Activated CD4-positive, alpha-beta T cell treated with anti-CD3 and anti-CD28 coated beads for 36 hours (primary cell): ENCODE measurements at regions of chr6 and their contacts with region 1.

Region 1: DNA sequence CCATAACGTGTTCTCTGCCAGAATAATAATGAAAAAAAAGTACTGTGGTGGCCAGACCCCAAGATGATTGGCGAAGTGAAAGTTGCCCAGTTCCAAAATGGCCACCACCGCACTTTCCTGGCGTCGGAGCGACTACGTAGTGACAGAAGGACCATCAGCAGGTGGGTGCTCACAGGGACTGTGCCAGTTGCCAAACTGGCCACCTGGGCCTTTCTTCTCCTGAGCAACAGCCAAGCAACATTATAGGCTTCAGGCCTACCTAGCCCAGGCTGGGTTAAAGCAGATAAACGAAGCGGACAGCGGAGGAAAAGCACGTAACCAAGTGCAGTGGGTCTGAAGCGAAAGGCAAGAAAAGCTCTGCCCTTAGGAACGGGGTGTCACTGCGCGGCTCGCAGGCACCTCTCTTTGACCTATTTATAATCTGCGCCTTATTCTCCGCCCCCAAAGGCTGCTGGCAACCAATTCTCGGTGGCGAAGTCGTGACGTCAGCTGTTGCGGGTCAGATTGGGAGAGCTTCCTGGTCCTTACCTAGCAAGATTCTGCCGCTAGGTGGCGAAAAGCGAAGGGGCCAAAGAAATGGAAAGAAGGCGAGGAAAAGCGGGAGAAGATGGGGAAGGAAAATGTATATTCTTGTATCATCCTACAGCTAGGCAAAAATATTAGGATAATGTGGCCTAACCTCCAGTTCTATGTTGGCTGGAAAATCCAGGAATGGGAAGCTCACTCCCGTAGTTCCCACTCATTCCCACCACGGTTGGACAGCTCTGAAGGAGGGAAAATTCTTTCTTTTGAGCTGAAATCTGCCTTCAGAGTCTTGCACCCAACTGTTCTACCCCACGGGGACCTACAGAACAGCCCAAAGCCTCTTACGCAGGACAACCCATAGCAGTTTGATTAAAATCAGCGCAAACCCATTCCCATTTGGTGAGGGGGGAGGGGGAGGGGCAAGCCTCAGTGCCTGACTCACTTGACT is 6.9 kb upstream of the MOG start:
- DNase-seq: peak; percentile 99
- ATAC-seq: peak; percentile 97
- H3K4me3 Mint-ChIP-seq: peak overlapping the region; percentile 80
- H3K27ac Mint-ChIP-seq: peak overlapping the region; percentile 97
- H3K4me1 Mint-ChIP-seq: peaks cover 10% of the 10 kb centered on the region
- H3K27me3 Mint-ChIP-seq: peaks cover 2% of the 10 kb centered on the region

Region 2: GRCh38 chr6:29611426-29611825 is 38.6 kb before region 1 on chr6:
- CTCF ChIA-PET with region 1: interaction called, 10 read pairs
- POLR2A ChIA-PET with region 1: no interaction called
- intact Hi-C with region 1: no loop called
- DNase-seq: no peak
- ATAC-seq: no peak
- H3K4me3 Mint-ChIP-seq: no peak overlapping the region
- H3K27ac Mint-ChIP-seq: no peak overlapping the region
- H3K4me1 Mint-ChIP-seq: no peaks in the 10 kb centered on the region
- H3K27me3 Mint-ChIP-seq: no peaks in the 10 kb centered on the region

Region 3: DNA sequence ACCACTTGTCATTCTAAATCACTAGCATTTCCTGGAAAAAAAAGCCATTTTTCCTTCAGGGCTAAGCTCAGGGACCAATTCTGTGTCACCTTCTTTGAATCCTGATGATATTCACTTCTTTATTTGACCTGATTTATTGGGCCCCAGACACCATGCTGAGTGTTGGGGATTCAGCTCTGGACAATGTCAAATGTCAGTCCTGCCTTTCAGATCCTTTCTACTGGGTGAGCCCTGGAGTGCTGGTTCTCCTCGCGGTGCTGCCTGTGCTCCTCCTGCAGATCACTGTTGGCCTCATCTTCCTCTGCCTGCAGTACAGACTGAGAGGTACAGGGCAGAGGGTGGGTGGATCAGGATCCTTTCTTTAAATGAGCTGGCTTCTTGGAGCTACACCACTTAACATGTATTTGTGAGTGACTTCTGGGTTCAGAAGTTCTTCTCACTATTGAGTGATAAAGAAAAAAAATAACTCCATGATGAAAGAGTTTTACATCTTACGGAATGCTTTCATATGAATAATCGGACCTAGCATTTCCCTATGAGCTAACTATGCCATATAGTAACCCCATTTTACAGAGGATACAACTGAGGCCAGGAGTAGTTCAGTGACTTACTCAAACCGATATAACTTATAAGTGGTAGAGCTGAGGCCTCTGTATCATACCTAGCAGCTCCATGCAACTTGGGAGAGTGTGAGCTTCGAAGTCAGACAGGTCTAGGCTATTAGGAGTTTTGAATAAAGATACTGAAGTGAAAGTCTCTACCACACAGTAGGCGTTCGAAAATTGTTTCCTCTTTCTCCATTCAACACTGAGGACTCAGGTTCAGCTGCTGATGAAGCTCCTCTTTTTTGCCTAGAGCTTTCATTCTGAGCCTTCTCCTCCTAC is 16.2 kb after region 1 on chr6:
- CTCF ChIA-PET with region 1: interaction called, 77 read pairs
- POLR2A ChIA-PET with region 1: no interaction called
- intact Hi-C with region 1: no loop called
- DNase-seq: no peak
- ATAC-seq: no peak
- H3K4me3 Mint-ChIP-seq: no peak overlapping the region
- H3K27ac Mint-ChIP-seq: no peak overlapping the region
- H3K4me1 Mint-ChIP-seq: no peaks in the 10 kb centered on the region
- H3K27me3 Mint-ChIP-seq: peaks cover 25% of the 10 kb centered on the region

Region 4: GRCh38 chr6:29705389-29706231 is 55.6 kb after region 1 on chr6:
- CTCF ChIA-PET with region 1: interaction called, 22 read pairs
- POLR2A ChIA-PET with region 1: no interaction called
- intact Hi-C with region 1: no loop called
- DNase-seq: no peak
- ATAC-seq: no peak
- H3K4me3 Mint-ChIP-seq: no peak overlapping the region
- H3K27ac Mint-ChIP-seq: no peak overlapping the region
- H3K4me1 Mint-ChIP-seq: peaks cover 47% of the 10 kb centered on the region
- H3K27me3 Mint-ChIP-seq: peaks cover 10% of the 10 kb centered on the region

Region 5: DNA sequence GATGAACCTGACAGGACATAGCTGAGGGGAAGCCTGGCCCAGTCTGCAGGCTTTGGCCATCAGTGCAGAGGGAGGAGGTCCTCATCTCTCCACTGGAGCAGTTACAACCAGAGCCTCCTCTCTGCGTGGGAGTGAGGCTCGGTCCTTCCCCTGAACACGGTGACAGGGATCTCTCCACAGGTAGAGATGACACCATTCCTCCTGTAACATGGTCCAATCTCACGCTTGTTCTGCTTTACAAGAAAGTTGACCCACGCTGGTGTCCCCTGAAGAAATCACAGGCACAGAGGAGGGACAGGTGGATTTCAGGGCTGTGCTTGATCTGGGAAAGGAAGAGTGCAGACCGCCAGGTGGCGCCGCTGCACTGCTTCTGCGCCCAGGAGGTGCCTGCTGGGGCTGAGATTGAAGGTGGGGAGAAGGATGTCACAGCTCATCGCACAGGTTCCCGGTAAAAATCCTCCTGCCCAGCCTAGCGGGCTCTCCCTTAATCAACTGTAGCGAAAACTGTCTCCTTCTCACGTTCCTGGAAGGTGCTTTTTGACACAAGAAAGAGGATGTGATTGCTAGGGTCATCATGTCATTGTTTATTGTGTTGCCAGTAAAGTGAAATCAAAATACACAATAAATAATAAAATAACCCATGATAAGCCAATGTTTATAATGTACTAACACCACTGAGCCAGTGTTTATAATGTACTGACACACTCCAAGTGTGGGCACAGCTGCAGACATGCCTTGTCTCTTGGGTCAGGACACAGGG is 198.1 kb after region 1 on chr6:
- CTCF ChIA-PET with region 1: interaction called, 10 read pairs
- POLR2A ChIA-PET with region 1: no interaction called
- intact Hi-C with region 1: no loop called
- DNase-seq: peak; percentile 91
- ATAC-seq: peak; percentile 74
- H3K4me3 Mint-ChIP-seq: no peak overlapping the region
- H3K27ac Mint-ChIP-seq: no peak overlapping the region
- H3K4me1 Mint-ChIP-seq: peaks cover 25% of the 10 kb centered on the region
- H3K27me3 Mint-ChIP-seq: peaks cover 44% of the 10 kb centered on the region

Region 6: DNA sequence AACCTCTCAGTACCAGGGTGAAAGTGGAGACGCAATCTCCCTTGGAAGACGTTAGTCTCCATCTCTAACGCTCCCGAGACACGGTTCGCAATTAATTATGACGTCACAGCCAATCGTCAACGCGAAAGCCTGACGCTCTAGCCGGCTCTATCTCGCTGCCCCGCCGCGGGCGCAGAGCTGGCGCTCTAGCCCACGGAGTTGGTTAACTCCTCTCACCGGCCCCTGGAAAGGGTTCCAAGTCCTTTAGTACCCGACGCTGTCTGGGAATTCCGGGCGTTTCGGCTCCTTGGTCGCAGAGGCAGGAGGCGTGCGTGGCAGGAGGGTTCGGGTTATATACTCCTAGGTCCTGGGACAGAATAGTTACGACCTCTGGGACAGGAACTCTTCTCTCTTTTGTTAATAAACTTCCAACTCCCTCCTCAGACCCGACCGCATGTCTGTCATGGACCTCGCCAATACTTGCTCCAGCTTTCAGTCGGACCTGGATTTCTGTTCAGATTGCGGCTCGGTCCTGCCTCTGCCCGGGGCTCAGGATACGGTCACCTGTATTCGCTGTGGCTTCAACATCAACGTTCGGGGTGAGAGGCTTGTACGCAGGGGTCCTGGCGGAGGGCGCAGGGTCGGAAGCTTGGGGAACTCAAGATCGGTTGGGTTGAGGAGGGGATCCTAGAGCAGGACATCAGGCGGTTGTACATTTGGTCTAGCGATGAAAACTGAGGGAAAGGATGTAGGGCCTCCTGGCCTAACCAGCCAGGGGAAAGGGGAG is 411.3 kb after region 1 on chr6 and contains the start of gene POLR1H:
- CTCF ChIA-PET with region 1: interaction called, 4 read pairs
- POLR2A ChIA-PET with region 1: interaction called, 3 read pairs
- intact Hi-C with region 1: loop called in 1 of 2 experiments (anchors 2 kb)
- DNase-seq: peak; percentile 92
- ATAC-seq: peak; percentile 88
- H3K4me3 Mint-ChIP-seq: peak within 1 kb of the TSS; percentile 94
- H3K27ac Mint-ChIP-seq: peak within 1 kb of the TSS; percentile 98
- H3K4me1 Mint-ChIP-seq: peaks cover 43% of the 10 kb centered on the region
- H3K27me3 Mint-ChIP-seq: no peaks in the 10 kb centered on the region
- total RNA-seq, gene POLR1H: 38.2 to 65.0 TPM